ENCODE measurements at regions of chr5 and their contacts with region 1.

Region 1: GRCh38 chr5:180860887-180861822 is at the start of gene ZFP62:
- DNase-seq: peak; percentile 95
- ATAC-seq: peak; percentile 81
- H3K4me3 ChIP-seq: peak within 1 kb of the TSS; percentile 67 to 99 (median 94)
- H3K4me3 Mint-ChIP-seq: peak within 1 kb of the TSS; percentile 88
- H3K27ac ChIP-seq: peak within 1 kb of the TSS; percentile 83 to 89
- H3K27ac Mint-ChIP-seq: peak within 1 kb of the TSS; percentile 98
- H3K4me1 ChIP-seq: peaks cover 7 to 8% of the 10 kb centered on the region in 2 donors
- H3K4me1 Mint-ChIP-seq: peaks cover 11% of the 10 kb centered on the region
- H3K27me3 ChIP-seq: no peaks in the 10 kb centered on the region
- H3K27me3 Mint-ChIP-seq: peaks cover 7% of the 10 kb centered on the region
- CTCF ChIP-seq: peak; percentile 36
- total RNA-seq, gene ZFP62: 61.8 and 65.1 TPM in 2 replicates

Region 2: GRCh38 chr5:180802325-180803180 is 58.6 kb before region 1 on chr5 and contains the start of gene MGAT1:
- CTCF ChIA-PET with region 1: interaction called, 14 read pairs
- POLR2A ChIA-PET with region 1: interaction called, 21 read pairs
- intact Hi-C with region 1: loop called (anchors 1 kb)
- DNase-seq: peak; percentile 82
- ATAC-seq: peak; percentile 65
- H3K4me3 ChIP-seq: peak within 1 kb of the TSS; percentile 82 to 96 (median 90)
- H3K4me3 Mint-ChIP-seq: peak within 1 kb of the TSS; percentile 96
- H3K27ac ChIP-seq: peak within 1 kb of the TSS; percentile 81 to 90
- H3K27ac Mint-ChIP-seq: peak within 1 kb of the TSS; percentile 87
- H3K4me1 ChIP-seq: peaks cover 80 to 83% of the 10 kb centered on the region in 2 donors
- H3K4me1 Mint-ChIP-seq: peaks cover 84% of the 10 kb centered on the region
- H3K27me3 ChIP-seq: no peaks in the 10 kb centered on the region
- H3K27me3 Mint-ChIP-seq: no peaks in the 10 kb centered on the region
- CTCF ChIP-seq: no peak
- total RNA-seq, gene MGAT1: 140 and 144 TPM in 2 replicates

Region 3: DNA sequence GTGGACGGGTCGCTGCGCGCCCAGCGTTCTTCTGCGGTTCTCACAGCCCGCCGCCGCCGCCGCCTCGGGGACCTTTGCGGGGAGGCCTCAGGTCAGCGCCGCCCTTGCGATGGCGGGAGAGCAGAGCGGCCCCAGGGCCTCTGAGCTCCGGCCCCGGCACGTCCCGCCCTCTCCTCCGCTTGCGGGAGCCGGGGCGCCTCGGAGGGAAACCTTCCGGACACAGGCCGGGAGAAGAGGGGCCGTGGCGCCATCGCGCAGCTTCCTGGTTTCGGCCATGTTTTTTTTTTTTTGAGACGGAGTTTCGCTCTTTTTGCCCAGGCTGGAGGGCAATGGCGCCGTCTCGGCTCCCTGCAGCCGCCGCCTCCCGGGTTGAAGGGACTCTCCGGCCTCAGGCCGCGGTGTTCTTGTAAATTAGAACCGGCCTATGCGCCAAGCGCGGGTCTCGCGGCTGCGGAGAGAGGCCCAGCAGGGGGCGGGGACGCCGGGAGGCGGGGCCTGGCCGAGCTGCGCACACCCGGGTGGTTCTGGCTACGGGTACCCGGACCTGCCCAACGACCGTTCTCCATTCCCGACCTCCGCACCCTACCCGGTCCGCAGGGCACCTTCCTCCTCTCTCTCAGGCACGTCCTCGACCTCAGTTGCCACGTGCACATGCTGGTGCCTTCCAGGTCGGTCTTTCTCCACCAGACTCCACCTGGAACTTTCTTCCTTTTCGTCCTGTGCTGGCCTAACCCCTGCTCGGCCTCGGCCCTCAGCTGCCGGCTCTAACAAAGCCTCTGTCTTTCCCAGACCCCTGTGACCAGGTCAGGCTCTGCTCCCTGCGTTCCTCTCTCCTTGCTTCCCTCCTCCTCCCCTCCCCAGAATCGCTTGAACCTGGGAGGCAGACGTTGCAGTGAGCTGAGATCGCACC is 29.8 kb before region 1 on chr5:
- CTCF ChIA-PET with region 1: interaction called, 24 read pairs
- POLR2A ChIA-PET with region 1: interaction called, 33 read pairs
- intact Hi-C with region 1: loop called (anchors 1 kb)
- DNase-seq: peak; percentile 87
- ATAC-seq: peak; percentile 83
- H3K4me3 ChIP-seq: peak overlapping the region; percentile 73 to 93 (median 77)
- H3K4me3 Mint-ChIP-seq: peak overlapping the region; percentile 98
- H3K27ac ChIP-seq: peak overlapping the region; percentile 93 to 96
- H3K27ac Mint-ChIP-seq: peak overlapping the region; percentile 98
- H3K4me1 ChIP-seq: peaks cover 35 to 52% of the 10 kb centered on the region in 2 donors
- H3K4me1 Mint-ChIP-seq: peaks cover 49% of the 10 kb centered on the region
- H3K27me3 ChIP-seq: no peaks in the 10 kb centered on the region
- H3K27me3 Mint-ChIP-seq: no peaks in the 10 kb centered on the region
- CTCF ChIP-seq: no peak

Region 4: DNA sequence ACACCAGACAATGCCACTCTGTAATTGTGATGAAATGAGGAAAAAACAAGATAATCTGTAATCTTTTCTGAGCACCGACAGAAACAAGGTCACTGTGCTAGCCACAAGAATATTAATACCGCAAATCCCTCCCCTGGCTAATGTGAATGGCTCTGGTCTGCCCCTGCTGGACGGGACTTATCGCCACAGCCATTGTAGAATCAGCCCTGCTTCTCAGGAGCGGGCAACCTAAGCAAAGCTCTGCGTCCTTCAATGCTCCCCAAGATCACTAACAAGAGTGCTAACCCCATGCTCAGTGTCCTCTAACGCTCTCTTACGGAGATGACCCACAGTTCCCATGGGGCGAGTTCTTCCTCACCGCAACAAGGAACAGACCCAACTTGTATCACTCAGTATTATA is 227.1 kb after region 1 on chr5:
- CTCF ChIA-PET with region 1: interaction called, 3 read pairs
- POLR2A ChIA-PET with region 1: no interaction called
- intact Hi-C with region 1: loop called (anchors 10 kb)
- DNase-seq: peak; percentile 38
- ATAC-seq: no peak
- H3K4me3 ChIP-seq: no peak overlapping the region
- H3K4me3 Mint-ChIP-seq: no peak overlapping the region
- H3K27ac ChIP-seq: no peak overlapping the region
- H3K27ac Mint-ChIP-seq: no peak overlapping the region
- H3K4me1 ChIP-seq: no peaks in the 10 kb centered on the region
- H3K4me1 Mint-ChIP-seq: no peaks in the 10 kb centered on the region
- H3K27me3 ChIP-seq: peaks cover 0 to 19% (median under 1%) of the 10 kb centered on the region in 4 experiments
- H3K27me3 Mint-ChIP-seq: peaks cover 15% of the 10 kb centered on the region
- CTCF ChIP-seq: peak; percentile 51

Region 5: GRCh38 chr5:181191529-181192394 is 330.6 kb after region 1 on chr5:
- CTCF ChIA-PET with region 1: interaction called, 3 read pairs
- POLR2A ChIA-PET with region 1: no interaction called
- intact Hi-C with region 1: loop called (anchors 2 kb)
- DNase-seq: peak; percentile 98
- ATAC-seq: peak; percentile 68
- H3K4me3 ChIP-seq: peak overlapping the region; percentile 86 to 98 (median 93)
- H3K4me3 Mint-ChIP-seq: peak overlapping the region; percentile 97
- H3K27ac ChIP-seq: peak overlapping the region; percentile 62 to 82
- H3K27ac Mint-ChIP-seq: peak overlapping the region; percentile 97
- H3K4me1 ChIP-seq: peaks cover 7 to 28% of the 10 kb centered on the region in 2 donors
- H3K4me1 Mint-ChIP-seq: peaks cover 40% of the 10 kb centered on the region
- H3K27me3 ChIP-seq: no peaks in the 10 kb centered on the region
- H3K27me3 Mint-ChIP-seq: peaks cover 10% of the 10 kb centered on the region
- CTCF ChIP-seq: no peak

Region 6: DNA sequence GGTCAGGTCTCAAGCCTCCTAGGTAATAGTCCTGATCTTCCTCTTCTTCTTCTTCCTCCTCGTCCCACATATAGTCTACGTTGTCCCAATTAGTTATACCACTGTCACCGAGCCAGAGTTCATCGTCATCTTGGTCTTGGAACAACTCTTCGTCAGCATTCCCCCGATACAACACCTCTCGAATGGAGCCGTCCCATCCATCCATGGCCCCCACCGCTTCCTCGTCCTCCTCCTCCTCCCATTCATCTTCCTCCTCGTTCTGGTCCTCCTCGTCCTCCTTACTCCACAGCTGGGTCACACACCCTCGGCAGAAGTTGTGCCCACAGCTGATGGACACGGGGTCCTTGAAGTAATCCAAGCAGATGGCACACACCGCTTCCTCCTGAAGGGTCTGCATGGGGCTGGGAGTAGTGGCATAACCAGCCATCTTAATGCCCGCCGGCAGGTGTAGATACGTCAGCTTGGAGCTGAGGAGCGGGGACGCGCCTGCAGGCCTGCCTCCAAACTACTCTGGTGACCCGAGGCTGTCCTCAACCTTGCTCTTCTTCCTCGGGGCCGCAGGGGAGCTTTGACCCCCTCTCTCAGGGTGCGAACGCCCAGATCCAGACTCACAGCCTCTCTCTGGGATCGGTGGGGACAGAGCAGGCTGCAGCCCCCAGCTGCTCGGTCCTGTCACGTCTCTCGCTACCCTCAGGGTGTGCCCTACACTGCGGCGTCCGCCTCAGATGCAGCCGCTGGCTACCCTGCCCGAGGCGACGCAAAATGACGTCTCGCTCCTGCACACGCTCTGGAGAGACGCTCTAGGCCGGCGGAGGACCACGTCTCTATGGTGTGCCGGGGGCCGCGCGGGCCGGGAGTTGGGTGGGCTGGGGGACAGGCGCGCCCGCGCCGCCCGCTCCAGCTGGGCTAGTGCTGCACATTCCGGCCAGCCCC is 399.5 kb after region 1 on chr5 and contains the start of gene TRIM52:
- CTCF ChIA-PET with region 1: no interaction called
- POLR2A ChIA-PET with region 1: no interaction called
- intact Hi-C with region 1: loop called (anchors 1 kb)
- DNase-seq: peak; percentile 94
- ATAC-seq: peak; percentile 79
- H3K4me3 ChIP-seq: peak within 1 kb of the TSS; percentile 67 to 99 (median 98)
- H3K4me3 Mint-ChIP-seq: peak within 1 kb of the TSS; percentile 95
- H3K27ac ChIP-seq: peak within 1 kb of the TSS; percentile 98
- H3K27ac Mint-ChIP-seq: peak within 1 kb of the TSS; percentile 97
- H3K4me1 ChIP-seq: peaks cover 22 to 38% of the 10 kb centered on the region in 2 donors
- H3K4me1 Mint-ChIP-seq: peaks cover 53% of the 10 kb centered on the region
- H3K27me3 ChIP-seq: no peaks in the 10 kb centered on the region
- H3K27me3 Mint-ChIP-seq: no peaks in the 10 kb centered on the region
- CTCF ChIP-seq: peak; percentile 17
- total RNA-seq, gene TRIM52: 58.6 and 61.3 TPM in 2 replicates

Measured in B cell (primary cell).